Adrenal gland (tissue), 19 donors: ENCODE measurements at regions of chrX and their contacts with region 1.

Region 1: DNA sequence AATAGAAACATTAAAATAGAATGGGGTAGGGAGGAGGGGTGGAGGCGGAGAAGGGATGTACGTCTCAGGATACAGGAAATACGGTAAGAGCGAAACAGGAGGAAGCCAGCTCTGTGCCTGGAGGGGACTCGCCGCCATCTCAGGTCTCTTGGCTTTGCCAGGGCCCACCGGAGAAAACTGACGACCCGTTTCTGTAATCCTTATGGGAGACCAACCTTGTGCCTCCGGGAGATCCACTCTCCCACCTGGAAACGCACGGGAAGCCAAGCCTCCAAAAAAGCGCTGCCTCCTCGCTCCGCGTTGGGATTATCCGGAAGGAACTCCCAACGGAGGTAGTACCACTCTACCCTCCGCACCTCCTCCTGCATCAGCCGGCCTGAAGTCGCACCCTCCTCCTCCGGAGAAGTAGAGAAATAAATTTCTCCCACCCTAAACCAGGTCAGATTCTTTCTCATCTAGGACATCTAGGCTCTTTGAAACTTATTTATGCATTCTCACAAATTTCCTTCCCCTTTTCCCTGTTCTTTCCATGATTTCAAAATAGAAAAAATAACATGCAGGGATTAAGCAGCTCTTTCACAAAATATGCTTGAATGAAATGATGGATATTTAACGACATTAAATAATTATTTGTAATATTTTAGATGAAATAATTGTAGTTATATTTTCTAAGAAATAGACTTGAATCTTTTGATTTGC is at the start of gene NBDY:
- DNase-seq: peak; percentile 34 to 66 (median 47)
- H3K4me3 ChIP-seq: peak within 1 kb of the TSS in 2 of 4 donors; percentile 25 to 65
- H3K27ac ChIP-seq: peak within 1 kb of the TSS; percentile 53 to 86 (median 77)
- H3K4me1 ChIP-seq: peaks cover 0 to 11% of the 10 kb centered on the region in 2 donors
- H3K27me3 ChIP-seq: peaks cover 10% of the 10 kb centered on the region
- CTCF ChIP-seq: no peak
- POLR2A ChIP-seq: peak in 1 of 2 donors; percentile 50
- total RNA-seq, gene NBDY: 14.7 to 76.5 (median 36.6) TPM

Region 2: DNA sequence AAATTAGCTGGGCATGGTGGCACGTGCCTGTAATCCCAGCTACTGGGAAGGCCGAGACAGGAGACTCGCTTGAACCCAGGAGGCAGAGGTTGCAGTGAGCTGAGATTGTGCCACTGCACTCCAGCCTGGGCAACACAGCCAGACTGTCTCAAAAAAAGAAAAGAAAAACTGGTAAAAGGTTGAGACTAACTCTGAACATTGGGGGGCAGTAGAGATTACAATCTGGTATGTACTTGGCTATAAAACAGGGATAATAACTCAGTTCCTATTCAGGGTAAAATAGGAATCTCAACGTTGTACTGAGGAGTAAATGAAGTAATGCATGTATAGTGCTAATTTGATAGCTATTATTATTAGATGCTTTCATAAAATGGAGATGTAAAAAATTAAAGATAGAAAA is 509.6 kb before region 1 on chrX:
- intact Hi-C with region 1: loop called in 1 of 2 experiments (anchors 10 kb)
- DNase-seq: no peak
- H3K4me3 ChIP-seq: no peak overlapping the region
- H3K27ac ChIP-seq: no peak overlapping the region
- H3K4me1 ChIP-seq: no peaks in the 10 kb centered on the region
- H3K27me3 ChIP-seq: no peaks in the 10 kb centered on the region
- CTCF ChIP-seq: peak in 2 of 6 experiments; percentile 11 to 31
- POLR2A ChIP-seq: no peak

Region 3: DNA sequence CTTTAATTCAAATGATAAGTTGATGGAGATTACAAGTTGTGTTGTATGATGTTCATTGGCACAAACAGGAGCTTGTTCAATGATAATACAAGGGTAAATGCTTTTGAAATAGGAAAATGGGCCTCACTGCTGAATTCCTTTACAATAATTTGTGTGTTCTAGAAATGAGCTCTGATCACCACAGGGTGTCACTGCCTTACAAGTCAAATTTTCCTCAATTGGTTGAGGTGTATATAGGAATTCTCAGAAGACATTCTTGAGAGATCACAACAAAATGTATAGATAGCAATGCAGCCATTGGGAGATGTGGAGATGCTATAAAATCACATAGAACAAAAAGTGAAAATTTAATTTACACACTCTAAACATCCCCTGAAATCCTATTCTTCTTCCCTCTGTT is 447.5 kb before region 1 on chrX:
- intact Hi-C with region 1: loop called in 1 of 2 experiments (anchors 10 kb)
- DNase-seq: no peak
- H3K4me3 ChIP-seq: no peak overlapping the region
- H3K27ac ChIP-seq: no peak overlapping the region
- H3K4me1 ChIP-seq: no peaks in the 10 kb centered on the region
- H3K27me3 ChIP-seq: peaks cover 19% of the 10 kb centered on the region
- CTCF ChIP-seq: peak in 1 of 6 experiments; percentile 8
- POLR2A ChIP-seq: no peak

Region 4: DNA sequence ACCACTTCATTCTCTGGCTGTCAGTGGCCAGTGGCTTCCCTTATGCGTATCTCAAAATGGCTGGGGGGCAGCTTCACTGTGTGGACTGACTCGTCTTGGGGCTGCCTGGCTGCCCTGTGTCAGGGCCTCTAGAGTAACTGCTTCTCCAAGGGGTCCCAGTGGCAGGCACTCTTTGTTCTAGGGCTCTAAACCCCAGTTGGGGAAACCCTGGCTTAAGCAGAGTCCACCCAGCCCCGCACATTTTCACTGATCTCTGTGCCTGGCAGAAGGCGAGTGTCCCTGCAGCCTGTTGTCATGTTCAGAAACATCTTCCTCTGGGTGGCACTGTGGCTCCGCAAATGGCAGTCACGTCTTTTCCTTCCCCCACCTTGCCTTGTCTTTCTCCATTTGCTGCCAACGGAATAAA is 59.4 kb after region 1 on chrX:
- intact Hi-C with region 1: no loop called
- DNase-seq: peak in 3 of 7 donors; percentile 74 to 79 (median 75)
- H3K4me3 ChIP-seq: no peak overlapping the region
- H3K27ac ChIP-seq: no peak overlapping the region
- H3K4me1 ChIP-seq: no peaks in the 10 kb centered on the region
- H3K27me3 ChIP-seq: no peaks in the 10 kb centered on the region
- CTCF ChIP-seq: peak in 4 of 6 experiments; percentile 7 to 70 (median 58)
- POLR2A ChIP-seq: no peak